ENCODE measurements at regions of chr14 and their contacts with region 1.

Region 1: DNA sequence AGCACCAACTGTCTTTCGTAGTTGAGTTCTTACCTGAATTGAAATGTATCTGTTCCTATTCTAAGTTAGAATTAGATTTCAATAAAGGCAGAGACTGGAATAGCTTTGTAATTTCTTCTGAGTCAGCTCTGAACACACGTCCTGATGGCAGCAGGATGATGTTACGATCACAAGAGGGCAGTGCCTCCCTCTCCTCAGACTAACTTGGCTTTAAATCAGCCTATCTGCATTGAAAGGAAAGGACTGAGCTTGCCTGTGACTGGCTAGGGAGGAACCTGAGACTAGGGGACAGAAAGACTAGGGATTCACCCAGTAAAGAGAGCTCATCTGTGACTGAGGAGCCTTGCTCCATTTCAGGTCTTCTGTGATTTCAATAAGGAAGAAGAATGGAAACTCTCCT is 323.7 kb upstream of the OR4E1 start:
- DNase-seq: peak; percentile 57
- H3K4me3 Mint-ChIP-seq: peak overlapping the region; percentile 82
- H3K27ac Mint-ChIP-seq: peak overlapping the region; percentile 85
- H3K4me1 Mint-ChIP-seq: peaks cover 27% of the 10 kb centered on the region
- H3K27me3 Mint-ChIP-seq: peaks cover 2% of the 10 kb centered on the region

Region 2: GRCh38 chr14:21965042-21965441 is 32.3 kb before region 1 on chr14:
- CTCF ChIA-PET with region 1: no interaction called
- POLR2A ChIA-PET with region 1: no interaction called
- DNase-seq: peak; percentile 50
- H3K4me3 Mint-ChIP-seq: peak overlapping the region; percentile 19
- H3K27ac Mint-ChIP-seq: peak overlapping the region; percentile 9
- H3K4me1 Mint-ChIP-seq: peaks cover 13% of the 10 kb centered on the region
- H3K27me3 Mint-ChIP-seq: peaks cover 3% of the 10 kb centered on the region

Region 3: GRCh38 chr14:22039938-22040775 is 42.9 kb after region 1 on chr14:
- CTCF ChIA-PET with region 1: interaction called, 10 read pairs
- POLR2A ChIA-PET with region 1: interaction called, 3 read pairs
- DNase-seq: peak; percentile 50
- H3K4me3 Mint-ChIP-seq: peak overlapping the region; percentile 66
- H3K27ac Mint-ChIP-seq: peak overlapping the region; percentile 68
- H3K4me1 Mint-ChIP-seq: peaks cover 11% of the 10 kb centered on the region
- H3K27me3 Mint-ChIP-seq: peaks cover 6% of the 10 kb centered on the region

Region 4: DNA sequence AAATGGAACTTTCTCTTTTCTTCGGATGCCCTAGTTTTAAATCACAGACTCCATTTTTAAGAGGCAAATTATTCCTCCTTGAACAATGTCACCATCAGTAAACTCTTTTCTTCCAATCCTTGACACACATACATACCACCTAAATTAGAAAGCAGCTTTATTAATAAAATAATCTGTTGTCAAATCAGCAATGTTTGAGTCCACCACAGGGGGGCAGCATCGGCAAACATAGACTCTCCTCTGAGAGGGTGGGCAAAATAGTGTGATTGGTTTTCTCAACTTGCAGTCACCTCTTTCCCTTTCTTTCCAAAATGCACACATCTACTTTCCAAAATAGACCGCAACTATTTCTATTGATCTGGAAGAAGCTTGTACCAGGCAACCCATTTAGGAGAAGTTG is 114.7 kb after region 1 on chr14:
- CTCF ChIA-PET with region 1: no interaction called
- POLR2A ChIA-PET with region 1: no interaction called
- DNase-seq: peak; percentile 53
- H3K4me3 Mint-ChIP-seq: peak overlapping the region; percentile 74
- H3K27ac Mint-ChIP-seq: peak overlapping the region; percentile 58
- H3K4me1 Mint-ChIP-seq: peaks cover 27% of the 10 kb centered on the region
- H3K27me3 Mint-ChIP-seq: no peaks in the 10 kb centered on the region